ENCODE measurements at regions of chr12 and their contacts with region 1.

Region 1: GRCh38 chr12:96578526-96579125 is 89.2 kb downstream of the CFAP54 start:
- DNase-seq: no peak

Region 2: DNA sequence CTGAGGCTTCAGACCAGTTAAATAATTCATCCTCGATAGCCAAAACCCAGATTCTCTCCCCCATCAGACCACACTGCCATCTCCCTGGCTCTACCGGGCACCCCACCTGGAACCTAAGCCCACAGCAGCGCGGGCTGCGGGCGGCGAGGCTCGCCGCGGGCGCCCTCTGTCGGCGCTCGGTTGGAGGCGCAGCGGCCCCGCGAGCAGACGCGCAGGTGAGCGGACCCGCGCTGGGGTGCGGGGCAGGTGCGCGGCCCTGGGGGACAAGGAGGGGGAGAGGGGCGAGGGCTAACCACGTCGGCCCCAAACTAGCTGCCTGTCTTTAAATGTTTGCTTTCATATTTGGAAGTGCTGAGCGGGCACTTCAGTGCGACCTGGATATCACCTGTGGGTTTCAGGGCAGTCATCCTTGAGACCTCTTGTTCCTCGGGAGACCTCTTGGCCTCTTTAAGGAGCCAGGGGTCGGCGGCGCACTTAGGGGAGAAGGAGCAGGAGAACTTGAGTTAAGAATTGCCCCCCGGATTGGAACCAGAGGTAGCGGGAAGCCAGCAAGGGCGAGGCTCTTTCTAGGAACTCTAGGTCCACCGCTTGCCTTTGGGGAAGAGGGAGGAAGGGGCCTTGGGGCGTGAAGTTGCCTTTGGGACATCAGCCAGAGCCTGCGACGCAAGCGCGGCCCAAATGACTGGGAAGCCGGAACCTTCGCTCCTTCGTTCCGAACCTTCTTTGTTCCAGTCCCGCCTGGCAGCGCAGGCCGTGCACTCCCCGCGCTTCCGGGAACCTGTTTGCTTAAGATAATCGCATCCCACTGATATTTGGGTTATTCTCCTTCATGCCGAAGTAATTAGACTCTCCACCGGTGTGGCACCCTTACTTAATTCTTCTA is 407.1 kb after region 1 on chr12:
- intact Hi-C with region 1: loop called (anchors 5 kb)
- DNase-seq: no peak

Region 3: GRCh38 chr12:97404543-97404942 is 825.9 kb after region 1 on chr12:
- intact Hi-C with region 1: loop called (anchors 10 kb)
- DNase-seq: no peak